ENCODE measurements at regions of chr3 and their contacts with region 1.

Region 1: GRCh38 chr3:109081746-109082510 is 36.0 kb downstream of the MORC1 start:
- H3K4me3 ChIP-seq: no peak overlapping the region
- H3K27ac ChIP-seq: no peak overlapping the region
- H3K4me1 ChIP-seq: no peaks in the 10 kb centered on the region
- CTCF ChIP-seq: no peak

Region 2: DNA sequence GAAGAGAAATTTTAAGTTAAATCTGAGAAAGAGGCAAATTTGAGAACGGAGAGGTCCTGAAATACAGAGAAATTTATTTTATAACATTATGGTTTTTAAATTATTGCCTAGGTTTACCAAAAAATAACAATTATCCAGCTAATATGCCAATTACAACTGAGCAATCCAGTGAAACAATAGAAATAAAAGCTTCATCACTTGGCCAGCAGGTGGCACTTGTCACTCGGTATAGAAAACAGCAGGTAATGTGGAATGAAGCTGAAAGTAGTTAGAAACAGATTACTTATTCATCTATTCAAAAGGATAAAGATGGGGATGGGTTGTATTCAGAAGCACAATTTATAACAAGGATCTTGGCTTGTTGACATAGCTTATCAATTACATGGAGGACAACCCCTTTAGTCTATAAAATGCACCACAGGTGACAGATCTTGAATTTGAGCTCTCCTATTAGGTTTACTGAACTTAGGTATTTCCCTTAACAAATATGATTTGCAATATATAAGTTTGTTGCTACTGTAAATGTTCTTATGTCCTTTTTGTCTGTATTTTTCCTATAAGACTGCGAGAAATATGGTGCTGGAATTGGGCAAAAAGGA is 58.2 kb before region 1 on chr3:
- CTCF ChIA-PET with region 1: interaction called, 12 read pairs
- POLR2A ChIA-PET with region 1: no interaction called
- H3K4me3 ChIP-seq: no peak overlapping the region
- H3K27ac ChIP-seq: no peak overlapping the region
- H3K4me1 ChIP-seq: no peaks in the 10 kb centered on the region
- CTCF ChIP-seq: no peak